OCI-LY7 (cell line): ENCODE measurements at regions of chr7 and their contacts with region 1.

Region 1: DNA sequence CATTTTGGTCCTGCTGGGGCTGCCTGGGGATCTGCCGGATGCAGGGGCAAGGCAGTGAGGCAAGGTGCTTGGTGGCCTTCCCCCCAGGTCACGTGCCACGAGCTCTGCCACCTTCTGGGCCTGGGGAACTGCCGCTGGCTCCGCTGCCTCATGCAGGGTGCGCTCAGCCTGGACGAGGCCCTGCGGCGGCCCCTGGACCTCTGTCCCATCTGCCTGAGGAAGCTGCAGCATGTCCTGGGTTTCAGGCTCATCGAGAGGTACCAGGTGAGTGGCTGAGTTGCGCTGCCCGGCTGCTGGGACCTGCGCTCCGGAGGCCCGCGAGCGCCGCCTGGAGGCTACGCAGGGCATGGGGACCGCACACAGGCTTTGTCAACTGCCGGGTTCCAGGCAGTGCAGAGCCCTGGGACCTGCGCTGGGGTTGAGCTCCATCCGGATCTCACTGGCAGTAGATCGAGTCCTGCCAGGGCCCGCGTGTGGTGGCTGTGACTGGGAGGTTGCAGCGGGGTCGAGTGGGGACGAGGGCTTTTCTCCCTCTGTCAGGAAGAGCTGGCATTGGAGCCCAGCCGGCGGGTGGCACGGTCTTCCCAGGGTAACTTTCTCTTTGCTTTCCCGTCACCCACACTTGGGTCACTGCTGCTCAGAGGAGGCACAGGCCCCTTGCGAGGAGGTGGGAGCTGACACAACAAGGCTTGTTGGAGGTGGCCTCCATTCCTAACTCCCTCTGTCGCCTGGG is 21.7 kb downstream of the AMZ1 start:
- DNase-seq: peak; percentile 92
- H3K4me3 ChIP-seq: peak overlapping the region; percentile 64
- H3K27ac ChIP-seq: peak overlapping the region; percentile 81
- H3K4me1 ChIP-seq: peaks cover 33% of the 10 kb centered on the region
- CTCF ChIP-seq: peak; percentile 97

Region 2: DNA sequence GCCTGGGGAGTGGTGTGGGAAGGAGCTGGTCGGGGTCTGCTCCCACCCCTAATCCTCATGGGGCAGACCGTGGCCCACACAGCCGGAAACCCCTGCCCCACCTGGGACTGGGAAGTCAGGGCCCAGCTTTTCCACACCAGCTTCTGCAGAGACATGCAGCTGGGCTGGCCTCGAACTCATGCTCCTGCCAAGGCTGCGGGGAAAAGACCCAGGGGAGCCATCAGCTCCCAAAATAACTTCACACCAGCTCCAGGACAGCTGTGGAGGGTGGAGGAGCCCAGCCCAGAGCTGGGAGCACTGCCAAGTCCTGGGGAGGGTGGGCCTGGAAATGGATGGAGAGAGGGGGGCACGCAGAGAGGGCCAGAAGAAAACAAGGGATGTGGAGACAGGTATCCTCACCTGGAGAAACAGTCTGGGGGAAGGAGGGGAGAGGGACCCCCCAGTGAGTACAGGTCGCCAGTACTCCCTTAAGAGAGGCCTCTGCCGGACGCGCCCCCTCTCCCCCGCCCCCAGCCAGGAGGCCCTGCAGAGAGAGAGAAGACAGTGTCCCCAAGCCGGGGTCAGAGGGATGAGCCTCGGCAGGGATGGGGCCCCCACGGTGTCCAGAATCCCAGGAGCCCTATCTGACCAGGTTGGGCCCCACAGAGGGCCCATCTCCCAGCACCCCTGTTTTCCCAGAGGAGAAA is 222.0 kb before region 1 on chr7:
- CTCF ChIA-PET with region 1: no interaction called
- POLR2A ChIA-PET with region 1: no interaction called
- intact Hi-C with region 1: no loop called
- DNase-seq: no peak
- H3K4me3 ChIP-seq: no peak overlapping the region
- H3K27ac ChIP-seq: no peak overlapping the region
- H3K4me1 ChIP-seq: no peaks in the 10 kb centered on the region
- CTCF ChIP-seq: no peak

Region 3: DNA sequence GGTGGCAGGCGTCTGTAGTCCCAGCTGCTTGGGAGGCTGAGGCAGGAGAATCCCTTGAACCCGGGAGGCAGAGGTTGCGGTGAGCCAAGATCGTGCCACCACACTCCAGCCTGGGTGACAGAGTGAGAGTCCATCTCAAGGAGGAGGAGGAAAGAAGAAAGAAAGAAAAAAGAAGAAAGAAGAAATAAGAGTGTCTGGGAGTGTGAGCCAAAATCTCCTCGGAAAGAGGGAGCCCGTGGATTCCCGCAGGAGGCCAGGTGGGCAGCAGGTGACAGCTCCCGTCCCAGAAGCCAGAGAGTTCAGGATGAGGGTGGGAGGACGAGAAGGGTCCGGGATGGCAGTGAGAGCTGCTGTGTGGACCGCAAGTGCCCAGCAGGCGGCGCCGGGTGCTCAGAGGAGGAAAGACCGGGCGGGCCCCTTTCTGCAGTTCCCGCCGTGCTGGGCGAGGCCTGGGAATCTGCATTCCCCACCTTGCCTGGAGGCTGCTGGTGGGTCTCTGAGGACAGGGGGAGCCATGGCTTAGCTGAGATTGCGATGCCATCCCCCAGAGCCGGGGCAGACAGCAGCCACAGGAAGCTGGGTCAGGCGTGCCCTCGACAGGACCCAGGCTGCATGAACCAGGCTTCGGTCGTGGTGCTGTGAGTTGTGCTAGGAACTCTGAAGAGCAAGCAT is 38.9 kb before region 1 on chr7:
- CTCF ChIA-PET with region 1: interaction called, 13 read pairs
- POLR2A ChIA-PET with region 1: interaction called, 7 read pairs
- intact Hi-C with region 1: loop called (anchors 1 kb)
- DNase-seq: peak; percentile 78
- H3K4me3 ChIP-seq: no peak overlapping the region
- H3K27ac ChIP-seq: no peak overlapping the region
- H3K4me1 ChIP-seq: no peaks in the 10 kb centered on the region
- CTCF ChIP-seq: peak; percentile 84

Region 4: DNA sequence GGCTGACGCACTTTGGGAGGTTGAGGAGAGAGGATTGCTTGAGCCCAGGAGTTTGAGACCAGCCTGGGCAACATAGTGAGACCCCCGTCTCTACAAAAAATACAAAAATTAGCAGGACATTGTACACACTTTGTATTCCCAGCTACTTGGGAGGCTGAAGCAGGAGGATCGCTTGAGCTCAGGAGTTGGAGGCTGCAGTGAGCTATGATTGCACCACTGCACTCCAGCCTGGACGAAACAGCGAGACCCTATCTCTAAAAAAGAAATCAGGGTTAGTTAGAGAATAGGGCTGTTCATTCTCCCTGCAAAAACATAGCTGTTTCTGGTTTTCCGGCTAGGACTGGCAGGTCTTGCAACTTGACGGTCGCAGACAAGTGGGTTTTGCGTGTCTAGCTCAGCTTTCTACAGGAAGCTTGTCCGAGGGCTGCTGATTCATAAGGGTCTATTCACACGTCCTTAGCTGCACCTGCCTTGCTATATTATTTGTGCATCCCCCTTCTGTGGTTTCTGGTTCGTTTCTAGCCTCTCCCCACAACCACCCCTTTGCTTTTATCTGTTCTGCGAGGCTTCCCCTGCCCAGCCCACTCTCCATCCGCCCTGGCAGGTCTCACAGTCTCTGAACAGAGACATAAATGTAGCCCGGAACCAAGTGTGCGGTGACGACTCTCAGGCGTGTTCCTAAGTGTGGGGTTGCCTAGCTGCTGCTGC is 11.0 kb before region 1 on chr7:
- CTCF ChIA-PET with region 1: interaction called, 6 read pairs
- POLR2A ChIA-PET with region 1: interaction called, 36 read pairs
- intact Hi-C with region 1: no loop called
- DNase-seq: peak; percentile 68
- H3K4me3 ChIP-seq: no peak overlapping the region
- H3K27ac ChIP-seq: no peak overlapping the region
- H3K4me1 ChIP-seq: peaks cover 14% of the 10 kb centered on the region
- CTCF ChIP-seq: no peak

Region 5: GRCh38 chr7:2750004-2750407 is 40.3 kb after region 1 on chr7:
- CTCF ChIA-PET with region 1: no interaction called
- POLR2A ChIA-PET with region 1: no interaction called
- intact Hi-C with region 1: no loop called
- DNase-seq: no peak
- H3K4me3 ChIP-seq: no peak overlapping the region
- H3K27ac ChIP-seq: no peak overlapping the region
- H3K4me1 ChIP-seq: no peaks in the 10 kb centered on the region
- CTCF ChIP-seq: no peak

Region 6: GRCh38 chr7:2844165-2844898 is 134.6 kb after region 1 on chr7 and contains the start of gene GNA12:
- CTCF ChIA-PET with region 1: no interaction called
- POLR2A ChIA-PET with region 1: interaction called, 3 read pairs
- intact Hi-C with region 1: loop called (anchors 1 kb)
- DNase-seq: peak; percentile 99
- H3K4me3 ChIP-seq: peak within 1 kb of the TSS; percentile 82
- H3K27ac ChIP-seq: no peak within 1 kb of the TSS
- H3K4me1 ChIP-seq: peaks cover 43% of the 10 kb centered on the region
- CTCF ChIP-seq: no peak
- total RNA-seq, gene GNA12: 6.5 and 10.3 TPM in 2 replicates